ENCODE measurements at regions of chr10 and their contacts with region 1.

Region 1: GRCh38 chr10:26890956-26891355 is 30.2 kb upstream of the ABI1 start:
- DNase-seq: peak; percentile 70
- H3K4me3 ChIP-seq: no peak overlapping the region
- H3K4me3 Mint-ChIP-seq: no peak overlapping the region
- H3K27ac Mint-ChIP-seq: no peak overlapping the region
- H3K4me1 ChIP-seq: no peaks in the 10 kb centered on the region
- H3K4me1 Mint-ChIP-seq: no peaks in the 10 kb centered on the region
- H3K27me3 ChIP-seq: no peaks in the 10 kb centered on the region
- H3K27me3 Mint-ChIP-seq: peaks cover 1% of the 10 kb centered on the region
- CTCF ChIP-seq: peak; percentile 70 to 72

Region 2: GRCh38 chr10:26642896-26643653 is 247.9 kb before region 1 on chr10:
- CTCF ChIA-PET with region 1: no interaction called
- POLR2A ChIA-PET with region 1: no interaction called
- intact Hi-C with region 1: no loop called
- DNase-seq: peak in 1 of 2 experiments; percentile 52
- H3K4me3 ChIP-seq: no peak overlapping the region
- H3K4me3 Mint-ChIP-seq: no peak overlapping the region
- H3K27ac Mint-ChIP-seq: no peak overlapping the region
- H3K4me1 ChIP-seq: no peaks in the 10 kb centered on the region
- H3K4me1 Mint-ChIP-seq: no peaks in the 10 kb centered on the region
- H3K27me3 ChIP-seq: no peaks in the 10 kb centered on the region; the same call in 1 of the 2 replicates
- H3K27me3 Mint-ChIP-seq: peaks cover 16% of the 10 kb centered on the region
- CTCF ChIP-seq: no peak

Region 3: GRCh38 chr10:27022048-27022447 is 131.1 kb after region 1 on chr10:
- CTCF ChIA-PET with region 1: no interaction called
- POLR2A ChIA-PET with region 1: no interaction called
- intact Hi-C with region 1: loop called (anchors 1 kb)
- DNase-seq: no peak
- H3K4me3 ChIP-seq: no peak overlapping the region
- H3K4me3 Mint-ChIP-seq: no peak overlapping the region
- H3K27ac Mint-ChIP-seq: no peak overlapping the region
- H3K4me1 ChIP-seq: no peaks in the 10 kb centered on the region
- H3K4me1 Mint-ChIP-seq: no peaks in the 10 kb centered on the region
- H3K27me3 ChIP-seq: no peaks in the 10 kb centered on the region
- H3K27me3 Mint-ChIP-seq: no peaks in the 10 kb centered on the region
- CTCF ChIP-seq: no peak

Region 4: DNA sequence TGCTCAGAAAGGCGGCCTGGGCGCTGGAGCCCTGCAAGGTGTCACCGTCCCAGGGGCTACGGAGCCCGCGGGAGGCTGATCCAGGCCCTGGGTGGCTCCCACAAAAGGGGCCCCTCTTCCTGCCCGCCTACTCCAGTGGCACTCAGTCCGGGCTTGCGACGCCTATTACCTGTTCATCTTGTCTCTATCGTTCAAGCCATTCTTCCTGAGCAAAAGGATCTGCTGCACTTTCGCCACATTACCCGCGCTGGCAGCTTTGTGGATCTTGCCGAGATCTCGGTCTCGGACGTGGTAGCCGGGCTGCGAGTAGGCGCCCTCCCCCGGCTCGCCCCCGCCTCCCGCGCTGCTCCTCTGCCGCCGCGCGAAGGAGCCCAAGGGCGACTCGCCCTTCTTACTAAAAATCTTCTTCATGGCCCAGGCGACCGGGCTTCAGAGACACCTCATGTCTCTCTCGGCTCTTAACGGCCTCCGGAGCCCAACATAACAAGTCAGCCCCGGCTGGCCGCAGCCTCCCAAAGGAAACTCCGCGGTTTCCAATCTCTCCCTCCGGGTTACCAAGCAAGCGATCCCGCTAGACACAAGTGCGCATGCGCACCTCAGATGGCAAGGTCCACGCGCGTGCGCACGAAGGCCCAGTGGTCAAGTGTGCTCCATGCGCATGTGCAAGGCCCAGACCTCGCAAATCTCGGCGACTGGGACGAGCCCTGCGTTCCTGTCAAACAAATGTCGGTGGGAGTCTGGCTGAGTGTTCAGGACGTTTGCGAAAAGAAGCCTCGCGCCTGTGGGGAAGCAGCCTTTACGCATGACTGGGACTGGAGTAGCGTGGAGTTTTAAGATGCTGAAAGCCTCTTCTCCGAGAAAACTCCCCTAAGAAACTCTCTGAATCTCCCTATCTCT is 209.2 kb after region 1 on chr10 and contains the start of gene ANKRD26:
- CTCF ChIA-PET with region 1: no interaction called
- POLR2A ChIA-PET with region 1: no interaction called
- intact Hi-C with region 1: loop called (anchors 1 kb)
- DNase-seq: peak; percentile 98 to 99
- H3K4me3 ChIP-seq: peak within 1 kb of the TSS; percentile 71
- H3K4me3 Mint-ChIP-seq: peak within 1 kb of the TSS; percentile 84
- H3K27ac Mint-ChIP-seq: peak within 1 kb of the TSS; percentile 89
- H3K4me1 ChIP-seq: no peaks in the 10 kb centered on the region; the same call in 1 of the 2 replicates
- H3K4me1 Mint-ChIP-seq: peaks cover 7% of the 10 kb centered on the region
- H3K27me3 ChIP-seq: no peaks in the 10 kb centered on the region
- H3K27me3 Mint-ChIP-seq: peaks cover 2% of the 10 kb centered on the region
- CTCF ChIP-seq: no peak
- total RNA-seq, gene ANKRD26: 16.2 and 17.5 TPM in 2 replicates

Region 5: DNA sequence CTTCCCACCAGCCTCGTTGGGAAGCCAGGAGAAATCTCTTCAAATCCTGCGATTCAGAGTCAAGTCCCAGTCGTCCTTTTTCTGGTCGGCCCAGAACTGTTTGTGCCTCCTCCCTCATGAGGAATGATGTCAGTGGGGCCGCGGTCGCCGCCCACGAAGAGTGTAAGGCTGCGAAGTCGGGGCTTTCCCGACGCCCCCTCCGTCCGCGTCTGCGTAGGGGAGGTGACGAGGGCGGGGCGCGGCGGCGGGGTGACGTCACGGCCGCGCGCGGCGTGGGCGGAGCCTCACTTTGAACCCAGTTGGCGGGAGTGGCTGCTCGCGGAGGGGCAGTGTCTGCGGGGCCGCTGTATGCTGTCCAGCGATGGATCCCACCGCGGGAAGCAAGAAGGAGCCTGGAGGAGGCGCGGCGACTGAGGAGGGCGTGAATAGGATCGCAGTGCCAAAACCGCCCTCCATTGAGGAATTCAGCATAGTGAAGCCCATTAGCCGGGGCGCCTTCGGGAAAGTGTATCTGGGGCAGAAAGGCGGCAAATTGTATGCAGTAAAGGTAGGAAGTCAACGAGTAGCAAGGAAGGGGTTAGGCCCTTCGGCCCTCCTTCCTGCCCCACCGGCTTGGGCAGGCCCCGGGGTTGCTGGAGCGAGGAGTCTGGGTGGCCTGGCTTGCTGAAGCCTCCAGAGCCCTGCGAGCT is 264.3 kb after region 1 on chr10 and contains the start of gene MASTL:
- CTCF ChIA-PET with region 1: no interaction called
- POLR2A ChIA-PET with region 1: no interaction called
- intact Hi-C with region 1: loop called (anchors 5 kb)
- DNase-seq: peak; percentile 95 to 96
- H3K4me3 ChIP-seq: peak within 1 kb of the TSS; percentile 52
- H3K4me3 Mint-ChIP-seq: peak within 1 kb of the TSS; percentile 99
- H3K27ac Mint-ChIP-seq: peak within 1 kb of the TSS; percentile 100
- H3K4me1 ChIP-seq: peaks cover 14% of the 10 kb centered on the region; the same call in 1 of the 2 replicates
- H3K4me1 Mint-ChIP-seq: peaks cover 31% of the 10 kb centered on the region
- H3K27me3 ChIP-seq: no peaks in the 10 kb centered on the region
- H3K27me3 Mint-ChIP-seq: no peaks in the 10 kb centered on the region
- CTCF ChIP-seq: no peak
- total RNA-seq, gene MASTL: 40.2 and 40.5 TPM in 2 replicates

Region 6: DNA sequence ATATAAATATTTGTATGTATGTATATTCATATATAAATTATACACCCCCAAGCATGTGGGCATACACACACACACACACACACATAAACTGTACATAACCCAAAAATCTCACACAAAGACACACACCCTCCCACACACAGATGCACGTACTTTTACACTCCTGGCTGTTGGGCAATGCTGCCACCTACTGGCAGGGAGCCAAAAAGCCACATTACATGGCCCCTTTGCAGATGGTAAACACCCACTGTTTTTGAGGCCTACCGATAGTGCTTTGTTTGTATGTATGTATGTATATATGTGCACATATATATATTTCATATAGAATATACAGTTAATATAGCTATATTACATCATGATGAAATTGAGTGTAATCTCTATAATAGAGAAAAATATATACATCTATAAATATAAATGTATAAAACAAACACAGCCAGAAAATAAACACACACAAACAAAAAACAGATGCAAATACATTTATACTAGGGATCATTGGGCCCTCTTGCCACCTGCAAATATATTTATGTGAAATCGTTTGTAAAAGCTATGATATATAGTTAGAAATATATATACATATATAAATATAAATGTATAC is 469.7 kb after region 1 on chr10:
- CTCF ChIA-PET with region 1: no interaction called
- POLR2A ChIA-PET with region 1: no interaction called
- intact Hi-C with region 1: loop called (anchors 1 kb)
- DNase-seq: peak; percentile 81 to 89
- H3K4me3 ChIP-seq: no peak overlapping the region
- H3K4me3 Mint-ChIP-seq: no peak overlapping the region
- H3K27ac Mint-ChIP-seq: no peak overlapping the region
- H3K4me1 ChIP-seq: no peaks in the 10 kb centered on the region
- H3K4me1 Mint-ChIP-seq: no peaks in the 10 kb centered on the region
- H3K27me3 ChIP-seq: no peaks in the 10 kb centered on the region
- H3K27me3 Mint-ChIP-seq: peaks cover 3% of the 10 kb centered on the region
- CTCF ChIP-seq: peak; percentile 98 to 99